Ascending aorta (tissue), 2 donors: ENCODE measurements at regions of chr2 and their contacts with region 1.

Region 1: DNA sequence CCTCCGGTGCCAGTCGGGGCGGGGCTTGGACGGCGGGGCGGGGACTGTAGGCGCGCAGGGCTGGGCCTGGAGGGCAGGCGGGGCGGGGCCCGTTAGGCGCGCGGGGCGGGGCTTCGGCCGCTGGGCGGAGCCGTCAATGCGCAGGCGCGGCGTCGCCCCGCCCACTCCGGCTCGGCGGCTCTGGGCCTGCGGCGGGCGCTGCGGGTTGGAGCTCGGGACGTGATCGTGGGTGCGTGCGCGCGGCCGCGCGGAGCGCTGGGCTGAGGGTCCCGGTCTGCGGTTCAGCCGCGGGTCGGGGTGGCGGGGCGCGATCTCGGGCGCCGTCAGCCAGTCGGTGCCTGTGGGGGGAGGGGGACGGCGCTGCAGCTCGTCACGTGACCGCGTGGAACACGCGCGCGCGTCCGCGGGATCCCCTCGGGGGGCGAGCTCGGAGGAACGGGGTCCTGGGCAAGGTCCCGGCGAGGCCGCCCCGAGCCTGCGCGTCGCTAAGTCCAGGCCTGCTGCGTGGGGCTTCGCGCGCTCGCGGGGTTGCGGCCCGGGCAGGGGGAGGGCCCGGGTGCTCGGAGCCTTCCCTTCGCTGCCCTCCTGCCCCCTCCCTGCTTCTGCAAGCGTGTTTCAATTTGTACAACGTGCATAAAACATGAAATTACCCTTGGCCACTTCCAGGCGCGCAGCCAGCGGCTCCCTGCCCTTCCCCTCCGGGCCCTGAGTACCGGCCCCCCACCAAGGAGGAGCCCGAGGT is at the start of gene D2HGDH:
- DNase-seq: peak; percentile 70 to 96
- H3K4me3 ChIP-seq: peak within 1 kb of the TSS; percentile 78 to 84
- H3K27ac ChIP-seq: peak within 1 kb of the TSS; percentile 81 to 86
- H3K4me1 ChIP-seq: peaks cover 5 to 6% of the 10 kb centered on the region in 2 donors
- H3K27me3 ChIP-seq: no peaks in the 10 kb centered on the region
- CTCF ChIP-seq: no peak
- total RNA-seq, gene D2HGDH: 22.2 TPM

Region 2: GRCh38 chr2:240851078-240851991 is 883.3 kb before region 1 on chr2:
- intact Hi-C with region 1: loop called (anchors 5 kb)
- DNase-seq: peak in 1 of 2 donors; percentile 89
- H3K4me3 ChIP-seq: no peak overlapping the region
- H3K27ac ChIP-seq: no peak overlapping the region
- H3K4me1 ChIP-seq: no peaks in the 10 kb centered on the region
- H3K27me3 ChIP-seq: no peaks in the 10 kb centered on the region
- CTCF ChIP-seq: peak; percentile 87 to 95 (median 94)

Region 3: GRCh38 chr2:241355983-241356870 is 378.4 kb before region 1 on chr2 and contains the start of gene FARP2:
- intact Hi-C with region 1: loop called (anchors 10 kb)
- DNase-seq: peak; percentile 99 to 100
- H3K4me3 ChIP-seq: peak within 1 kb of the TSS; percentile 69 to 79
- H3K27ac ChIP-seq: peak within 1 kb of the TSS; percentile 90
- H3K4me1 ChIP-seq: peaks cover 8 to 31% of the 10 kb centered on the region in 2 donors
- H3K27me3 ChIP-seq: no peaks in the 10 kb centered on the region
- CTCF ChIP-seq: no peak
- total RNA-seq, gene FARP2: 19.6 TPM

Region 4: DNA sequence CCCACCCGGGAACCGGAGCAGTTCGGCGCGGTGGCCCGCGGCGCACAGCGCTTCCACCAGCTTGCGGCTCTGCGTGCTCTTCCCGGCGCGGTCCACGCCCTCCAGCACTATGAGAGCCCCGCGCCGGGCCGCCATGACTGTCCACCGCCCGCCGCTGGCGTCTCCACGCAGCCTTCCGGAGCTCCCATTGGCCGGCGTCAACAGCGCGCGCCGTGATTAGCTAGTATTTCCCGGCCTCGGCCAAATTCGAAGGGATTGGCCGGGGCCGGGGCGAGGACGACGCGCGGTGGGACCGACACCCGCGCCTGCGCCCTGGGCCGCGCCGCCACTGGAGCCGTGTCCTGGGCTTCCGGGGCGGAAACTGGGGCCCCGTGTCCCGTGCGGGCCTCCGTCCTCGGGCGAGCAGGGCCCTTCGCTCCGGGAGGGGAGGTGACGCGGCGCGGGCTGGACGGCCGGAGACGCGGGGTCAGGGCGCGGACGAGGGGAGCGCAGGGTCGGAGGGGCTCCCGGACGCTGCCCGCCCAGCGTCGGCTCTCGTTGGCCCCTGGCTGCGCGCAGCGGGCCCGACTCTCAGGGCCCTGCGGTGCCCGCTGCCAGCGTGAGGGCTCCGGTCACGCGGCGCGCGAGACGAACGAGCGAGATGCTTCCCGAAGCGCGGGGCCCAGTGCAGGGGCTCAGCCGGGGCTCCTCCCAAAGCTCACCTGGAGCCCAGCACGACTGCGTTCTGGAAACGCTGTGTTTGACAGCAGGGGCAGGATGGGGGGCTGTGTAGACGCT is 47.8 kb before region 1 on chr2 and contains the start of gene DTYMK:
- intact Hi-C with region 1: loop called (anchors 1 kb)
- DNase-seq: peak; percentile 84 to 97
- H3K4me3 ChIP-seq: peak within 1 kb of the TSS; percentile 85 to 94
- H3K27ac ChIP-seq: peak within 1 kb of the TSS; percentile 90 to 94
- H3K4me1 ChIP-seq: peaks cover 7 to 18% of the 10 kb centered on the region in 2 donors
- H3K27me3 ChIP-seq: no peaks in the 10 kb centered on the region
- CTCF ChIP-seq: no peak
- total RNA-seq, gene DTYMK: 25.0 TPM

Region 5: DNA sequence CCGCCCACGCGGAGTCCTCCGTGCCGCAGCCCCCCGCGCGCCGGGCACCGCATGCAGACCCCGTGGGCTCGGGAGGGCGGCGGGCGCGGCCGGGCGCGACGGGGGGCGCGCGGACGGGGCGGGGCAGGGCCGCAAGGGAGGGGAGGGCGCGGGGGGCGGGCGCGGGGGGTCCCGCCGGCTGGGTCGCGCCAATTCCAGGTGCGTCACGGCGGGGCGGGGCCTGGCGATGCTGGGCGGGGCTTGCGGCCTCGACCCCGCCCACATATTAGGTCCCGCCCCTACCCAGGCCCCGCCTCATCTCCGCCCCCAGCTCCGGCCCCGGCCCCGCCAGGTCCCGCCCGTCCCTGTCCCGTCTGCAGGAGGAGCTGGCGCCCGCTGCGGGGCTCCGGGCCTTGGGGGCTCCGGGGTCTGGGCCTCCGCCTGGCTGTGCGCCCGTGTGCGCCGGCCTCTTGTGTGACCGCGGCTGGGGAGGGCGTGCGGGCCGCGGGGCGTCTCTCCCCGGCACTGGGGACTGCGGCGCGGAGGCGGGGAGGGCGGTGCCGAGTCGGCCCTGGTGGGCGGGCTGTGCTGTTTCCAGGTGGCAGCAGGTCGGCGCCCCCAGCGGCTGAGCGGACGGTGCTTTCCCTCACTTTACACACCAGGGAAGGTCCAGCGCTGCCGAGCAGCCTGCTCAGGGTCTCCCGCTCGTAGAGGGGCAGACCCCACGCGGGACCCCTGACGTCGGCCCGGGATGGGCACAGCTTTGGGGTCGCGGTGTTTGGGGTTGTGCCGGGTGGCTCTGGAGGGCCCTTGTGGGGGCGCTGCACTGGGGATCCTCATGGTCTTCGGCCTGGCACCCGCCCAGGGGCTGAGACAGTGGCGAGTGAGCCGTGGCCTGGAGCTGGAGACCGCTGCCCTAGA is 32.3 kb before region 1 on chr2:
- intact Hi-C with region 1: loop called (anchors 1 kb)
- DNase-seq: peak; percentile 15 to 87
- H3K4me3 ChIP-seq: peak overlapping the region; percentile 75 to 82
- H3K27ac ChIP-seq: peak overlapping the region; percentile 93 to 96
- H3K4me1 ChIP-seq: peaks cover 6 to 14% of the 10 kb centered on the region in 2 donors
- H3K27me3 ChIP-seq: no peaks in the 10 kb centered on the region
- CTCF ChIP-seq: peak; percentile 20 to 33 (median 27)

Region 6: GRCh38 chr2:241844066-241844728 is 109.6 kb after region 1 on chr2:
- intact Hi-C with region 1: loop called (anchors 2 kb)
- DNase-seq: peak; percentile 35 to 88
- H3K4me3 ChIP-seq: peak overlapping the region; percentile 54 to 63
- H3K27ac ChIP-seq: peak overlapping the region; percentile 46 to 60
- H3K4me1 ChIP-seq: peaks cover 8% of the 10 kb centered on the region in 2 donors
- H3K27me3 ChIP-seq: no peaks in the 10 kb centered on the region
- CTCF ChIP-seq: no peak

Region 7: DNA sequence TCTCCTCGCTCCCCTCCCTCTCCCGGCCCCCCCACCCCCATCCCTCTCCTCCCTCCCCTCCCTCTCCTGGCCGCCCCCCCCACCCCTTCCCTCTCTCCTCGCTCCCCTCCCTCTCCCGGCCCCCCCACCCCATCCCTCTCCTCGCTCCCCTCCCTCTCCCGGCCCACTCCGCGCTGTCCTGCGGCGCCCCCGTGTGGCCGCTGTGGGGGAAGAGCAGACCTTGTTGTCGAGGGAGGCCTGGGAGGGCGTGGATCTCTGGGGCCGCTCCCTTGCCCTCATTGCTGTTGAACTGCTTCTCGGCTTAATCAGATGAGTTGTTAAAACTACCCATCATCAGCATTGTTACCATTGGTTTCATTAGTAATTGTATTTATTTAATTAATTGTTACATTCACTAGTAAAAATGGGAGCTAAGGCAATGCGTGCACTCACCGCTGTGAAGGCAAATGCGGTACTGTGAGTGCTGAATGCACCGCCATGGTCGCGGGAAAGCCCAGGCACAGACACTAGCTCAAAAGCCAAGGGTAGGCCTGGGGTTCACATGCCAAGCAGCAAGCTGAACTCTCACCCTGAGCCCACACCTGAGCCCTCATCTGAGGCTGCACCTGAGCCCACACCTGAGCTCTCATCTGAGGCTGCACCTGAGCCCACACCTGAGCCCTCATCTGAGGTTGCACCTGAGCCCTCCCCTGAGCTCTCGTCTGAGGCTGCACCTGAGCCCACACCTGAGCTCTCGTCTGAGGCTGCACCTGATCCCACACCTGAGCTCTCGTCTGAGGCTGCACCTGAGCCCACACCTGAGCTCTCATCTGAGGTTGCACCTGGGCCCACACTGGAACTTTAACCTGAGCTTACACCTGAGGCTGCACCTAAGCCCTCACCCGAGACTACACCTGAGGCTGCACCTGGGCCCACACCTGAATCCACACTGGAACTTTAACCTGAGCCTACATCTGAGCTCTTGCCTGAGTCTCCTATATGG is 143.6 kb after region 1 on chr2:
- intact Hi-C with region 1: loop called (anchors 1 kb)
- DNase-seq: peak in 1 of 2 donors; percentile 81
- H3K4me3 ChIP-seq: no peak overlapping the region
- H3K27ac ChIP-seq: no peak overlapping the region
- H3K4me1 ChIP-seq: peaks cover 5 to 9% of the 10 kb centered on the region in 2 donors
- H3K27me3 ChIP-seq: no peaks in the 10 kb centered on the region
- CTCF ChIP-seq: peak; percentile 44 to 82 (median 78)